Cardiac septum (tissue), 1 donor: ENCODE measurements at regions of chr7 and their contacts with region 1.

Region 1: DNA sequence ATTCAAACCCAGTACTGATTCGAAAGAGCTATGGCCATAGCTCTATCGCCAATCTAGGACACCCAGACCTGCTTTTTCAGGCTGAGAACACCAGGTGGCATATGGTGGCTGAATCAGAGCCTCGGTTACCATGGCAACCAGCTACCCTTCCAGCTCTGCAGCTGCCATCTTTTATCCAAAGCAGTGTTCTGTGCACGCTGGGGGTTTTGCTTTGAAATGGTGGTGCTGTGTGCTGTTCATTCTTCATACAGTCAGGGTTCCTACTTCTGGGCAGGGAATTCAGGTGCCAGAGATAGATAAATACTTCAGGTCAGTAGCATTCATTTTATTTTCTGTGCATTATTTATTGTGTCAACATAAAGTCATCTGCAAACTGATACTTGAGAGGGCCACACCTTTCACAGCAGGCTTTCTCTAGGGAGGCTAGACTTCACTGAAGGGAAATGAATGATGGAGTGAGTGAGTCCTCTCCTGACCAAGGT is 85.4 kb downstream of the AKR1D1 start:
- DNase-seq: peak; percentile 79

Region 2: DNA sequence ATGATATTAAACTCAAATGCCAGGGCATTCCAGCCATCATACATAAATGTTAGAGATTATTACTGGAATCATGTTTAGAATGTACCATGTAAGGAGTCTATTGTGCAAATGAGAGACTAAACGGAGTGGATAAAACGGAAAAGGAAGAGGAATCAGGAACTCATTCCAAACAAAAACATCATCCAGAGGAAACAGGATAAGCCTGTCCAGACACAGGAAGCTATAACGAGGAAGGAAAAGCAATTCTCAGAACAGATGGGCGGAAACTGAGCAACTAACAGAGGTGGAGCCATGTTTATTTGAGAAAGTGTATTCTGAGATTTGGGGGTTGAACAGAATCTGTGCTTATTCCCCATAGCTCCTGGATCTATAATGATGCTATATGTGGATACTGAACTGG is 246.2 kb after region 1 on chr7:
- intact Hi-C with region 1: no loop called
- DNase-seq: no peak

Region 3: GRCh38 chr7:138738551-138739335 is 577.1 kb after region 1 on chr7:
- intact Hi-C with region 1: loop called (anchors 2 kb)
- DNase-seq: peak; percentile 87